Activated T-helper 1 cell treated with anti-CD3 and anti-CD28 coated beads, Interleukin-12 subunit alpha, Interleukin-12 subunit beta, Interleukin-2, Interleukin-4 antibody, amounts not matched to agents 30 ng/mL and 10 ng/mL and 1 ng/mL, durations not matched to agents 14 hours and 24 hours and 36 hours (primary cell): ENCODE measurements at regions of chr7 and their contacts with region 1.

Region 1: GRCh38 chr7:23055582-23056178 is 41.8 kb upstream of the HYCC1 start:
- DNase-seq: peak; percentile 43
- H3K4me3 Mint-ChIP-seq: no peak overlapping the region
- H3K27ac Mint-ChIP-seq: no peak overlapping the region
- H3K4me1 Mint-ChIP-seq: peaks cover 5% of the 10 kb centered on the region
- H3K27me3 Mint-ChIP-seq: peaks cover 2% of the 10 kb centered on the region

Region 2: DNA sequence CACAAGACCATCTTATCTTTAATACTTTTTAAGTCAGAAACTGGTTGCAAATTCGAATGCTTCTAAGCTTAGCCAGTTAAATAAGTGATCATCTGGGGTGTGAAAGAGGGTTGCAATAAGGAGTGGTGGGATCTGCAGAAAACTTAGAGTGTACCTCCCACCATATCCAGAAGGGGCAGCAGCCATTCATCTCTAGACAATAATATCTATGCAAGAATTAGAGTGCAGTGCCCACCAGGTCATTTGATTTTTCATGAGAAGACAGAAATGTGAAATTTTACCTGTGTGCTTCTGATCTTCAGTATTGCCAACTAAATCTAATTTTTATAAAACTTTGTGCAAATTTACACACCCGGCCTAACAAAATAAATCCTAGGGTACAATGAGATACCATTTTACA is 1755.0 kb before region 1 on chr7:
- intact Hi-C with region 1: no loop called
- DNase-seq: no peak
- H3K4me3 Mint-ChIP-seq: no peak overlapping the region
- H3K27ac Mint-ChIP-seq: no peak overlapping the region
- H3K4me1 Mint-ChIP-seq: peaks cover 7% of the 10 kb centered on the region
- H3K27me3 Mint-ChIP-seq: no peaks in the 10 kb centered on the region

Region 3: GRCh38 chr7:22726345-22727185 is 329.1 kb before region 1 on chr7:
- intact Hi-C with region 1: loop called (anchors 1 kb)
- DNase-seq: peak; percentile 46
- H3K4me3 Mint-ChIP-seq: peak overlapping the region; percentile 32
- H3K27ac Mint-ChIP-seq: no peak overlapping the region
- H3K4me1 Mint-ChIP-seq: peaks cover 48% of the 10 kb centered on the region
- H3K27me3 Mint-ChIP-seq: peaks cover 29% of the 10 kb centered on the region

Region 4: GRCh38 chr7:22822486-22823141 is 233.1 kb before region 1 on chr7 and contains the start of gene TOMM7:
- intact Hi-C with region 1: loop called (anchors 1 kb)
- DNase-seq: peak; percentile 81
- H3K4me3 Mint-ChIP-seq: peak within 1 kb of the TSS; percentile 98
- H3K27ac Mint-ChIP-seq: peak within 1 kb of the TSS; percentile 93
- H3K4me1 Mint-ChIP-seq: peaks cover 41% of the 10 kb centered on the region
- H3K27me3 Mint-ChIP-seq: peaks cover 17% of the 10 kb centered on the region
- total RNA-seq, gene TOMM7: 187 and 225 TPM in 2 replicates

Region 5: GRCh38 chr7:22885797-22886261 is 169.9 kb before region 1 on chr7:
- intact Hi-C with region 1: loop called (anchors 1 kb)
- DNase-seq: peak; percentile 60
- H3K4me3 Mint-ChIP-seq: peak overlapping the region; percentile 59
- H3K27ac Mint-ChIP-seq: peak overlapping the region; percentile 93
- H3K4me1 Mint-ChIP-seq: peaks cover 41% of the 10 kb centered on the region
- H3K27me3 Mint-ChIP-seq: no peaks in the 10 kb centered on the region

Region 6: GRCh38 chr7:22972207-22972606 is 83.5 kb before region 1 on chr7:
- intact Hi-C with region 1: loop called (anchors 5 kb)
- DNase-seq: no peak
- H3K4me3 Mint-ChIP-seq: no peak overlapping the region
- H3K27ac Mint-ChIP-seq: no peak overlapping the region
- H3K4me1 Mint-ChIP-seq: peaks cover 12% of the 10 kb centered on the region
- H3K27me3 Mint-ChIP-seq: no peaks in the 10 kb centered on the region

Region 7: GRCh38 chr7:23020742-23021401 is 34.8 kb before region 1 on chr7:
- intact Hi-C with region 1: loop called (anchors 1 kb)
- DNase-seq: no peak
- H3K4me3 Mint-ChIP-seq: peak overlapping the region; percentile 35
- H3K27ac Mint-ChIP-seq: peak overlapping the region; percentile 80
- H3K4me1 Mint-ChIP-seq: peaks cover 52% of the 10 kb centered on the region
- H3K27me3 Mint-ChIP-seq: peaks cover 9% of the 10 kb centered on the region